ENCODE measurements at regions of chr5 and their contacts with region 1.

Region 1: GRCh38 chr5:170633235-170634081 is 129.6 kb downstream of the KCNIP1 start:
- DNase-seq: no peak
- H3K4me3 ChIP-seq: peak overlapping the region; percentile 31 to 50 (median 36)
- H3K27ac ChIP-seq: peak overlapping the region; percentile 81 to 87 (median 82)
- H3K4me1 ChIP-seq: peaks cover 16 to 29% (median 26%) of the 10 kb centered on the region in 4 donors
- H3K27me3 ChIP-seq: no peaks in the 10 kb centered on the region
- CTCF ChIP-seq: peak in 1 of 3 experiments; percentile 1
- EP300 ChIP-seq: no peak
- POLR2A ChIP-seq: no peak

Region 2: DNA sequence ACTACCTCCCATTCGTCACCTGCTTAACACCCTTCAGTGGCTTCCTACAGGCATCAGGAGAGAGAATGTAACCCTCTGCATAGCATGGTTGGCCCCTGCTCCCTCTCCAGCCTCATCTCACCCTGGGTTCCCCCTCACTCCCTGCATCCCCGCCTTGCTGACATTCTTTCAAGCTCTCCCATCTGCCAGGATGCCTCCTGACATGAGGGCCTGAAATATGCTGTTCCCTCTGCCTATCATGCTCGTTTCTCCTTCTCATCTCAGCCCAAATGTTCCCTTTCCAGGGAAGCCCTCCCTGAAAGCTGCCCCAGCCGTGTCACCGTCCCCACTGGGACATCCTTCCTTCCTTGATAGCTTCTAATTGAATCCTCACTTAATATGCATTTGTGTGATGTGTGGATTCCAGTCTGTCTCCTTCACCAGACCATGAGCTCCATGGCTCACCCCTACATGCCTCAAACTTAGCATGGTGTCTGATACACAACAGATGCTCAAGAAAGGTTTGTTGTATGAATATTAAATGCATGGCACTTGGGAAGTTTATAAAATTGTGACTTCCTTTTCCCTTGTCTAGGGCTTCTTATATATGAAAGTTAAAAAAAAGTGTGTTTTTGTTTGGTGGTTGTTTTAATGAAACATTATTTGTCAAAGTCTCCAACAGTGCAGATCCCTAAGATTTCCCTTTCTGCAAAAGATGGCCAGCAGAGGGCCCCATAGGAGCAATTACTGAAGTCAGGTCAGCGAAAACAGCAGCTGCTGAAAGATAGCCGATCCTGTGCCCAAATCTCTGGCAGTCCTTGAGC is 407.9 kb before region 1 on chr5:
- intact Hi-C with region 1: loop called (anchors 5 kb)
- DNase-seq: peak; percentile 96
- H3K4me3 ChIP-seq: no peak overlapping the region
- H3K27ac ChIP-seq: peak overlapping the region in 1 of 4 donors; percentile 27
- H3K4me1 ChIP-seq: peaks cover 0 to 59% (median 47%) of the 10 kb centered on the region in 4 donors
- H3K27me3 ChIP-seq: no peaks in the 10 kb centered on the region
- CTCF ChIP-seq: peak; percentile 73 to 84 (median 81)
- EP300 ChIP-seq: no peak
- POLR2A ChIP-seq: no peak

Region 3: GRCh38 chr5:170434966-170435605 is 198.4 kb before region 1 on chr5:
- intact Hi-C with region 1: loop called (anchors 2 kb)
- DNase-seq: no peak
- H3K4me3 ChIP-seq: no peak overlapping the region
- H3K27ac ChIP-seq: no peak overlapping the region
- H3K4me1 ChIP-seq: peaks cover 0 to 7% (median 0%) of the 10 kb centered on the region in 4 donors
- H3K27me3 ChIP-seq: peaks cover 0 to 31% (median 1%) of the 10 kb centered on the region in 4 donors
- CTCF ChIP-seq: peak in 2 of 3 experiments; percentile 95 to 98
- EP300 ChIP-seq: no peak
- POLR2A ChIP-seq: no peak